MCF 10A (cell line): ENCODE measurements at regions of chr12 and their contacts with region 1.

Region 1: DNA sequence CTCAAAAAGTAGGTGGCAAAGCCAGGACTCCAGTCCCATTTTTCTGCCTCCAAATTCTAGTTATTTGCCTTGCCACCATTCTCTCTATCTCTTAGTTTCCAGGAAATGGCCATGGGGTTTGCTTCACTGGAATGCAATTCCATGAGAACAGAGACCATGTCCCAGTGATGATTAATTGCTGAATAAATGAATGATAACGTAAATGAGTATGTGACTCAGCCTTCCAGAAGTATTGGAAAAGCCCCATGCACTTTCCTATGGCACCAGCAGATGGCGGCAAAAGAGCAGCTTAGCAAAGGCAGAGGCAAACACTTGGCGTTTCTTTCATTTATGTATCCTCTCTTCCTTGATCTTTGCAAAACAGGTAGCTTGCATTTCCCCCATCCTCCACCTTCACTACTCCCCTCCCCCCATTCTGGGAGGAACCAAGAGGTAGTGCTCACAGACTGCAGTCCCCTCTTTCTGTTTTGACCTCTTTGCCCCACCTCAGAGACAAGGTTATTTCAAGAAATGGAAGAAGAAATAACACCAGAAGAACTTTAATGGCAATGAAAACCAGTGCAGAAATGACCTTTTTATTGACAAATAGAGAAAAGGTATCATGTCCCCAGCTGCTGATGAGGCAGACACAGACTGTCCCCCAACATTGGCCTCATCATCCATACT is 21.3 kb downstream of the TBX3 start:
- DNase-seq: peak; percentile 86
- H3K4me3 Mint-ChIP-seq: no peak overlapping the region
- H3K27ac Mint-ChIP-seq: no peak overlapping the region
- H3K4me1 Mint-ChIP-seq: peaks cover 6% of the 10 kb centered on the region
- H3K27me3 Mint-ChIP-seq: no peaks in the 10 kb centered on the region
- CTCF ChIP-seq: peak; percentile 92

Region 2: GRCh38 chr12:114631245-114631644 is 31.4 kb before region 1 on chr12:
- CTCF ChIA-PET with region 1: no interaction called
- POLR2A ChIA-PET with region 1: no interaction called
- intact Hi-C with region 1: no loop called
- DNase-seq: no peak
- H3K4me3 Mint-ChIP-seq: no peak overlapping the region
- H3K27ac Mint-ChIP-seq: no peak overlapping the region
- H3K4me1 Mint-ChIP-seq: no peaks in the 10 kb centered on the region
- H3K27me3 Mint-ChIP-seq: no peaks in the 10 kb centered on the region
- CTCF ChIP-seq: no peak

Region 3: DNA sequence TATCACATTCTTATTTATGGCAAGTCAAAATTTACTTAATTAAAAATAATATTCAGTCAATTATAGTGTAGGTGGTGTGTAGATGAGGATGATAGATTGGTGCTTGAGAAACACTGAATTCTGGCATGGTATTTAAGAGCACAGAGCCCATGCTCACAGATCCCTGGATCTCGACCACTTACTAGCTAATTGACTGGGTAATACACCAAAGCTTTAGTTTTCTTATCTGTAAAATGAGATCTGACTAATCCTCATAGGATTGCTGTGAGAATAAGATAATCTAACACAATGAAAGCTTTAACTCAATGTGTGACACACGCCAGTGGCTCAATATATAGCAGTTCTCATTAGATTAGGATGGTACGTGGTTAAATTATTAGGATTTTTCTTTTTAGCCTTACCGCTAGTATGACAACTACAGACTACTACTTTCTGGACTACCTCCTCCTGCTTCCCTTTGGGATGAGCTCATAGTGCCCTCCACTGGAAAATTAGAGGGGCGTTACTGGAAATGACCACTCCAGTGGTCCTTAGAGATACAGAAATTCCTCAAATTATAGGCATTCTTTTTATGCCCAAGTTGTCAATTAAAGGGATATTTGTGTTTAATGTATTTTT is 504.2 kb after region 1 on chr12:
- CTCF ChIA-PET with region 1: no interaction called
- POLR2A ChIA-PET with region 1: no interaction called
- intact Hi-C with region 1: loop called (anchors 5 kb)
- DNase-seq: peak; percentile 25
- H3K4me3 Mint-ChIP-seq: no peak overlapping the region
- H3K27ac Mint-ChIP-seq: no peak overlapping the region
- H3K4me1 Mint-ChIP-seq: no peaks in the 10 kb centered on the region
- H3K27me3 Mint-ChIP-seq: no peaks in the 10 kb centered on the region
- CTCF ChIP-seq: no peak

Region 4: DNA sequence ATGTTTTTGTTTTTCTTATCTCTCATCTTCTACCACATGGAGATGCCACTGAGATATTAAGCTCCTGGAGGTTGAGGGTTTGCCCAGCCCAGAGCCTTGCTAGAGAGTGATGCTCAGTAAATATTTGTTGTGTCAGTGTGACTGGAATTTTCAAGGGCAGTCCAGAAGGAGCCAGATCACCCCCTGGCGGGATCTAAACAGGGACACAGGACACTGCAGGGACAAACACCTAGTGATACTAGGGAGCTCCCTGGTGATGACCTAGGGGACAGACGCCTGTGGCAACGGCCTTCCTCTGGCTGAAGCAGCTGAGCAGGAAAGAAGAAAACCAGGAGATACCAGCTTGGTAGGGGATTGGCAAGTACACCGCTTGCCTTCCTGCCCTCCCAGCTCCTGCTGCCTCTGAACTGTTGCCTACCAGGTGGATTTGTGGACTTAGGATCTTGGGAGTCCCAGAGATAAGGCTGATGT is 735.7 kb after region 1 on chr12:
- CTCF ChIA-PET with region 1: interaction called, 5 read pairs
- POLR2A ChIA-PET with region 1: no interaction called
- intact Hi-C with region 1: loop called (anchors 1 kb)
- DNase-seq: peak; percentile 32
- H3K4me3 Mint-ChIP-seq: no peak overlapping the region
- H3K27ac Mint-ChIP-seq: no peak overlapping the region
- H3K4me1 Mint-ChIP-seq: no peaks in the 10 kb centered on the region
- H3K27me3 Mint-ChIP-seq: peaks cover 10% of the 10 kb centered on the region
- CTCF ChIP-seq: peak; percentile 36